Transverse colon (tissue), 4 donors: ENCODE measurements at regions of chr7 and their contacts with region 1.

Region 1: GRCh38 chr7:29309041-29309854 is 114.7 kb downstream of the CHN2 start:
- DNase-seq: no peak
- H3K4me3 ChIP-seq: no peak overlapping the region
- H3K27ac ChIP-seq: no peak overlapping the region
- H3K4me1 ChIP-seq: no peaks in the 10 kb centered on the region
- H3K27me3 ChIP-seq: no peaks in the 10 kb centered on the region
- CTCF ChIP-seq: no peak
- EP300 ChIP-seq: no peak
- POLR2A ChIP-seq: no peak

Region 2: GRCh38 chr7:29479301-29480200 is 170.3 kb after region 1 on chr7:
- in situ Hi-C with region 1: no loop called
- intact Hi-C with region 1: no loop called
- DNase-seq: peak; percentile 35
- H3K4me3 ChIP-seq: peak overlapping the region in 1 of 4 donors; percentile 3
- H3K27ac ChIP-seq: peak overlapping the region; percentile 41 to 86 (median 80)
- H3K4me1 ChIP-seq: peaks cover 9 to 40% (median 19%) of the 10 kb centered on the region in 4 donors
- H3K27me3 ChIP-seq: no peaks in the 10 kb centered on the region
- CTCF ChIP-seq: no peak
- EP300 ChIP-seq: no peak
- POLR2A ChIP-seq: no peak

Region 3: DNA sequence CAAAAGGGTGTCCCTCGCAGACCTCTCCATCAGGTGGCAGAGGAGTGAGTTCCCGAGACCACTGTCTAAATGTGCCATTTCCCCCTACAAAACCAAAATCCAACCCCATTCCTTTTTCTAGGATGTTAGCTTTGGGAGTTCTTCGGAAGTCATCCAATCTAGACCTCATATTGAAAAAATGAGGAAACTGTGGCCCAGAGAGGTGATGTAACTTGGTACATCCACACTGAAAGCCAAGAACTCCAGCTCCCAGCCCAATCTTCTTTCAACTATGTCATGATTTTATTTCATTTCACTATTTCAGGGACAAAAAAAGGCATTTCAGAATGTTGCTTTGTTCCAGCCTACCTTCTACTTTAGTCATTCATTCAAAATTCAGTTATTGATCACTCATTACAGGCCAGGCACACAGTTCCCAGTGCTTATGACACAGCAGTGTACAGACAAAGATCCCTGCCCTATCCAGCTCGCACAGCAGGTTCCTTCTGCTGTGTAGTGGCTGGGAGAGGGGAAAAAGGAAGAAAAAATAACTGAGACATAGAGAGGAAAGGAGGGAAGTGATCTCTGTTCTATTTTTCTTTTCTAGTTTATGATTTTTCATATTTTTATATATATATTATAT is 644.6 kb after region 1 on chr7:
- in situ Hi-C with region 1: no loop called
- intact Hi-C with region 1: loop called (anchors 5 kb)
- DNase-seq: no peak
- H3K4me3 ChIP-seq: no peak overlapping the region
- H3K27ac ChIP-seq: no peak overlapping the region
- H3K4me1 ChIP-seq: no peaks in the 10 kb centered on the region
- H3K27me3 ChIP-seq: no peaks in the 10 kb centered on the region
- CTCF ChIP-seq: no peak
- EP300 ChIP-seq: no peak
- POLR2A ChIP-seq: no peak